ENCODE measurements at regions of chr1 and their contacts with region 1.

Region 1: DNA sequence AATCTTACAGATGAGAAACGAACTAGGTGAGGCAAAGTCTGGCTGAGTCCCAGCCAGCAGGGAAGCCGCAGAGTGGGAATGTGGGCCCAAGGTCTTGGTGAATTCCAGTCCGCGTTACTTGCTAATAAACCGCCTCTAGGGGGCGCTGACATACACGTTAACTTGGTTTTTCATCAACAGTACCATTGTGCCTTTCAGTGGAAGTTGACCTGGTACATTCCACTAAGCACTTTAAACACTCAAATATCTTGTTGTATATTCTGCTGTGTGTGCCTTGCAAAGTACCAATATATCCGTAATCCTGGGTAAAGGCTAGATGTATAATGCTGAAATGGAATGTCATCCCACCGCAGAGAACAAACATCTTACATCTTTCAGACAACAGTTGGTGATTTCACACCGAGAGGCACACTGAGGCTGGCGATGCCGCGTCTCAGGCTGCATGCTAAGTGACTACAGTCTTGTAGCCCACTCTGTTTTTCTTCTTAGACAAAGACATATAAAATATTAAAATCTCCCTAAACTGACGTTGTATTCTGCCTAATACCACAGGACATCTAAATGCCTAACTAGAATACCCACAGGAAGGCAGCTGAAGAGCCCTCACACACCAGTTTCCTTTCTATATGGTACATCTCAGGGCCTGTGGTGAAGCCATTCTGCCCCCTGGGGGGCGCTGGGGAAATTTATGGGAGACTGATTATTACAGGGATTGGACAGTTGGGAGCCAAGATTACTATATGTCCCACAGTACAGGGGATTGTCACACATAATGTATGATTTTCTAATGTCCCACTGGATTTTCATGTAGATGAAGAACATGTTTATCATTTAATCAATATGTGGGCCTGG is 49.2 kb upstream of the C1orf198 start:
- DNase-seq: peak; percentile 71 to 75
- H3K4me3 ChIP-seq: no peak overlapping the region
- H3K27ac ChIP-seq: no peak overlapping the region
- H3K4me1 ChIP-seq: peaks cover 0 to 10% (median 9%) of the 10 kb centered on the region in 4 donors
- H3K27me3 ChIP-seq: no peaks in the 10 kb centered on the region
- CTCF ChIP-seq: peak; percentile 49 to 59

Region 2: DNA sequence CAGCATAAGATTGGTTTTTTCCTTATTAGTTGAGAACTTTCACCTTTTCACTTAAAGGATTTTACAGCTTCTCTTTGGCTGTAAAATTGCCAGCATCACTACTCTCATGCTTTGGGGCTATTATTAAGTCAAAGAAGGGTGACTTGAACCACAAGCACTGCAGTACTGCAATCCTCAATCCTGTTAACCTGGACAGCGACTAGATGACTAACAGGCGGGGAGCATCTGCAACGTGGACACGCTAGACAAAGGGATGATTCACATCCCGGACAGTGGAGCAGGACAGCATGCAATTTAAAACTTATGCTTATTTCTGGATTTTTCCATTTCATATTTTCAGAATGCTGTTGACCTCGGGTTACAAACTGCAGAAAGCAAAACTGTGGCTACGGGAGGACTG is 69.5 kb after region 1 on chr1:
- intact Hi-C with region 1: no loop called
- DNase-seq: no peak
- H3K4me3 ChIP-seq: no peak overlapping the region
- H3K27ac ChIP-seq: no peak overlapping the region
- H3K4me1 ChIP-seq: no peaks in the 10 kb centered on the region
- H3K27me3 ChIP-seq: no peaks in the 10 kb centered on the region
- CTCF ChIP-seq: no peak

Region 3: DNA sequence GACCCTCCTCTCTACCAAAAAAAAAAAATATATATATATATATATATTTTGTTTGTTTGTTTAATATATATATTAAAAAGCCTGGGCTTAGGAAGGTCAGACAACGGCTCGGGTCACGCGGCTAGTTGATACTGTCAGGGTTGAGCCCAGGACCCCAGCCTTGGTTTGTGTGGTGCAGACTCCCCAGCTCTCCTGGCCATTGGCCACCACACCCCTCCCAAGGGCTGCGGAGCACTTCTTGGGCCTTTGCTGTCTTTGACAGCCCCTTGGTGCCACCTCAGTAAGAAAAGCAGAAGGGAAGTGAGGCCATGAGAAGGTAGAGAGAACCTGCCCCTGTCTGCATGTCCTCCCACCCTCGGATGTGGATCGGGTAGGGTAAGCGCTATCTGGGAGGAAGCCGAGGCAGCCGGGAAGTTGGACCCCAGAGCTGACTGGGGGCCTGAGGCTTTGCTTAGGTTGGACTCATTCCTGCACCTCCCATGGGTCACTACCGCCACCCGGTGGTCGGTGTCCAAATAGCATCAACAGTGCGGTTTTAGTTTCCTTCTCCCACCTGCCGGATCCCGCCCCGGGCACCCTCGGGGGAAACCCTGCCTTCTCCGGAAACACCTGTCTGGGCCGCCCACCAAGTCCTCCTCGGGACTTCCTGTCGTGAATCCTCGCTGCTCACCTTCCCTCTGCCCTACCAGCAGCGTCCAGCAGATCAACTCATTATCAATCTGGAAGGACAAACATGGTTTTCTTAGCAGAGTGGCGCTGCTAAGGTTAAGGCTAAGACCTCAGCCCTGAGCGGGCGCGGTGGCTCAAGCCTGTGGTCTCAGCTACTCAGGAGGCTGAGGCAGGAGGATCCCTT is 293.7 kb after region 1 on chr1:
- intact Hi-C with region 1: loop called (anchors 5 kb)
- DNase-seq: peak; percentile 61 to 78
- H3K4me3 ChIP-seq: peak overlapping the region; percentile 34 to 50
- H3K27ac ChIP-seq: no peak overlapping the region
- H3K4me1 ChIP-seq: peaks cover 0 to 6% (median 4%) of the 10 kb centered on the region in 4 donors
- H3K27me3 ChIP-seq: peaks cover 0 to 21% of the 10 kb centered on the region in 2 donors
- CTCF ChIP-seq: peak; percentile 83 to 92

Measured in tibial artery (tissue), 4 donors.